Activated T-helper 2 cell treated with anti-CD3 and anti-CD28 coated beads, Interferon-gamma antibody, Interleukin-2, Interleukin-4, amounts not matched to agents 10 μg/mL and 5 μg/mL and 100 μg/mL, durations not matched to agents 14 hours and 24 hours and 36 hours (primary cell): ENCODE measurements at regions of chrX and their contacts with region 1.

Region 1: DNA sequence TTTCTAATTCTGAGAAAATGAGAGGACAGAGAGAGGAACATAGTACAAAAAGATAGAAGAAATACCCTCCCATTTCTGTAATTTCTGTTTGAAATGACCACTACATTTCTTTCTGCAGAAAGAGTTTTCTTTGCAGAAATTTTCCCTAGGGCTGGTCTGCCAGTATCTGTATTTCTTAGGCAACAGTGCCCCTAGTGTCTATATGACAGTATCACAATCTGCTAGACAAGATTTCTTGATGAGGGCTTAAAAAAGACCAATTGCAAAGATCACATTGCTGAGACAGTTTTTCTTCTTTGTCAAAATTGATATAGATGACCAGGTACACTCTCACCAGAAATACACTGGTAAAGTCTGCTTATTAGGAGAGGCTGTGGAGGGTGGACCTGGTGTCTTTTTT is 81.0 kb upstream of the ZDHHC15 start:
- DNase-seq: no peak
- H3K4me3 Mint-ChIP-seq: no peak overlapping the region
- H3K27ac Mint-ChIP-seq: no peak overlapping the region
- H3K4me1 Mint-ChIP-seq: no peaks in the 10 kb centered on the region
- H3K27me3 Mint-ChIP-seq: no peaks in the 10 kb centered on the region

Region 2: DNA sequence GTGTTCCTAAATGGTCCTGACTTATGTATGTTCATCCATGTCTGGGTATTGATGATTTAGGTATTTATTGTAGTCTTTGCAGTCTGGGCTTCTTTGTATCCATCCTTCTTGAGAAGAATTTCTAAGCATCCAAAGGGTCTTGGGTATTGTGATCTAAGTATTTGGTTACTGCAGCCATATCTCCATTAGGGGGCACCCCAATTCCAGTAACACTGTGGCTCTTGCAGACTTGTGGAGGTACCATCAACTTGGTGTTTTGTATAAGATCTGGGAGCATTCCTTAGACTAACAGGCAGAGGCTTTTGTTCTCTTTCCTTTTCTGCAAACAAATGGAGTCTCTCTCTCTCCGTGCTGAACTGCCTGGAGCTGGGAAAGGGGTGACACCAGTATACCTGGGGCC is 564.9 kb before region 1 on chrX:
- intact Hi-C with region 1: loop called (anchors 5 kb)
- DNase-seq: no peak
- H3K4me3 Mint-ChIP-seq: no peak overlapping the region
- H3K27ac Mint-ChIP-seq: no peak overlapping the region
- H3K4me1 Mint-ChIP-seq: no peaks in the 10 kb centered on the region
- H3K27me3 Mint-ChIP-seq: no peaks in the 10 kb centered on the region